Heart left ventricle (tissue), 16 donors: ENCODE measurements at regions of chr6 and their contacts with region 1.

Region 1: DNA sequence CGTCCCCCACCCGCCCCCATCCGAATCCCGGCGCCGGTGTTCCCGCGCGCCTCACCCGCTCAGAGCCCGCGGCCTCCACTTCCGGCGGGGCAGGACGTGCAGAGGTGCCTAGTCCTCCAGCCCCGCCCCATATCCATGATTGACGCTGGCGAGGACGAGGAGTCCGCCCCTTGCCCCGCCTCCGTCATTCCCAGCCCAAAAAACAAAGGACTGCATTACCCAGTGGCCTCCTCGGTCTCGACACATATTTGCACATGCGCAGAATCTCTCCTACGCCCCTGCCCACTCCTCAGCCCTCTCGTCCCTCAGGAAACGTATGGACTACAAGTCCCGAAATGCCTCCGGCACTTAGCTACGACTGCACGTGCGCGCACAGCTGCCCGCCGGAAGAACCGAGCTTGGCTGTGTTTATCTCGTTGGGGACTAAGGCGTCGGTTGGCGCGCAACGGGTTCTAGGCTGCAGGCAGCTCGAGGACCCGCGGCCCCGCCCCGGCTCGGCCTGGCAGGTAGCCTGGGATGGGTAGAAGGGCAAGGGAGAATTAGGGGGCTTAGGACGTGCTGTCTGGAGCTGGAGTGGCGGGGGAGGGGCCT is at the starts of genes KLHDC3 and MEA1:
- DNase-seq: peak; percentile 99
- ATAC-seq: peak; percentile 92 to 96 (median 94)
- H3K4me3 ChIP-seq: peak within 1 kb of the TSS; percentile 51 to 90 (median 74)
- H3K27ac ChIP-seq: peak within 1 kb of the TSS; percentile 25 to 97 (median 84)
- H3K4me1 ChIP-seq: peaks cover 4 to 57% (median 47%) of the 10 kb centered on the region in 12 donors
- H3K27me3 ChIP-seq: no peaks in the 10 kb centered on the region
- CTCF ChIP-seq: no peak
- POLR2A ChIP-seq: peak; percentile 22 to 65
- total RNA-seq, gene KLHDC3: 79.4 to 180 (median 102) TPM
- total RNA-seq, gene MEA1: 24.5 to 46.2 (median 32.1) TPM

Region 2: DNA sequence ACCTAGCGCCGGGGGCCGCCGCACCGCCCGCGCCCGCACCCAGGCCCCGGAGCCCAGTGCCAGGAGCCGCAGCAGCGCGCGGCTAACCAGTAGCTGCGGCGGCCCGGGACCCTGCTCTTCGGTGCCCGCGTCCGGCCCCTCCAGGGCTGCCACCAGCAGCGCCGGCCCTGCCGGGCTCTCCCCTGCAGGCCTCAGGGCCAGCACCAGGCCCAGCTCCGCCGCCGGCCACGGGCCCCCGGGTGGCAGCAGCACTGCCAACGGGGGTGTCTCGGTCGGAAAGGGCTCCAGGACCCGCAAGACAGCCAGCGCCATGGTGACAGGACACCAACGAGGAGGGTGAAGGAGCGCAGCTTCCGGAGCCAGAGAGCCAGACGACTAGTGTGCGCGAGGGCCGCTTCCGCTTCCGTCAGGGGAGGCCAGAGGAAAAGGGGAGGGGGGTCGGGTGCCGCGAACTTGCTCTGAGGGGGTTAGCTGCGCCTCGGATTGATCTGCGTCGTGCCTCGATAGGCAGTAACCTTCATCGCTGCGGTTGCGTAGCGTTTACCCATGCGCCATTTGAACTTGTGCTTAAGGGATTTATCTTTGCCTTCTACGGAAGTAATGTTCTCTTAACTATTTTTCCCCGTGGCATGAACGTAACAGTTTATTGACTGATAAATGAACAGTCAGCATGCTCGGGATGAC is 35.0 kb before region 1 on chr6 and contains the start of gene PEX6:
- intact Hi-C with region 1: loop called in 2 of 10 experiments (anchors 2 to 5 kb)
- DNase-seq: peak; percentile 90 to 96 (median 94)
- ATAC-seq: peak; percentile 93 to 97 (median 96)
- H3K4me3 ChIP-seq: peak within 1 kb of the TSS; percentile 61 to 99 (median 88)
- H3K27ac ChIP-seq: peak within 1 kb of the TSS; percentile 27 to 95 (median 91)
- H3K4me1 ChIP-seq: peaks cover 0 to 41% (median 28%) of the 10 kb centered on the region in 12 donors
- H3K27me3 ChIP-seq: no peaks in the 10 kb centered on the region
- CTCF ChIP-seq: no peak
- POLR2A ChIP-seq: peak in 1 of 2 donors; percentile 52
- total RNA-seq, gene PEX6: 11.2 to 27.3 (median 19.6) TPM

Region 3: GRCh38 chr6:43053545-43054205 is 39.7 kb after region 1 on chr6 and contains the start of gene CUL7:
- intact Hi-C with region 1: loop called in 5 of 10 experiments (anchors 2 to 5 kb)
- DNase-seq: peak; percentile 93 to 96 (median 96)
- ATAC-seq: peak; percentile 92 to 97 (median 96)
- H3K4me3 ChIP-seq: peak within 1 kb of the TSS; percentile 36 to 87 (median 74)
- H3K27ac ChIP-seq: peak within 1 kb of the TSS; percentile 81 to 97 (median 94)
- H3K4me1 ChIP-seq: peaks cover 0 to 34% (median 18%) of the 10 kb centered on the region in 12 donors
- H3K27me3 ChIP-seq: no peaks in the 10 kb centered on the region
- CTCF ChIP-seq: peak in 3 of 12 donors; percentile 3 to 12 (median 7)
- POLR2A ChIP-seq: peak in 1 of 2 donors; percentile 83
- total RNA-seq, gene CUL7: 5.6 to 13.2 (median 7.9) TPM

Region 4: DNA sequence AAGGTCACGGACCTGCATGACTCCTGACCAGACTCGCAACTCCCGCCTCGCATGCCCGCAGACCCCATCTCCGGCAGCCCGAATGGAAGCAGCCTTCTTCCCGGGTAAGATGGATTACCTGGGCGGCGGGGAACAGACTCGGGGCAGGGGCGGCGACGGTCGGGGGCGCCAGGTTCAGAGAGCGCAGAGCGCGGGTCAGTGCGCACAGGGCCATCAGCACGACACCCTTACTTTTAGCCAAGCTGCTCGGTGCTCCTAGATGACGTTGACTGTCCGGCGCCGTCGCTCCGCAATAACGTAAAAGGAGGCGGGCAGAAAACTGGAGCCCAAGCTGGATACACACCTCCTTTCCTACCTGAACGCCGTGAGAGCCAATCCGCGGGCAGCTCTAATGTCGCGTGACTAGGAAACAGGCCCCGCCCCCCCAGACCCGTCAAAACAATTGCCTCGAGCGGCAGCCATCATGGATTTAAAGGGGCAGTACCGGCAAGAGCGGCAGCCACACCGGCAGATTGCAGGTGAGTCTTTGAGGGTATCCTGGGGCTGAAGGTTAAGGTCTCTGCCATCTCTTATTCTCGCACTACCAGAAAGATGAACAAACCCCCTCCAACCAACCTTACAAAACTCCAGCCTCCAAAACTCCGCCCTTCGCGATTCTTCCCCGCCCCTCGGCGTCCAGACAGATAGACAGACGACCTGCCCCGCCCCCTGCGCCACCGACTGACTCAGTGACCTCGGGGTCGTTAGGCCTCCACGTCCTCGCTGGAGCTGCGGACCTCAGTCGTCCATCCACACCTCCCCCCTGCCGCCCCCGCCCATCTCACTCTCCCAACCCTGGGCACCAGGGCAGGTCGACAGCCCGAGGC is 45.5 kb after region 1 on chr6 and contains the starts of genes KLC4 and MRPL2:
- intact Hi-C with region 1: loop called in 7 of 10 experiments (anchors 1 to 5 kb)
- DNase-seq: peak; percentile 97 to 99 (median 98)
- ATAC-seq: peak; percentile 96 to 99 (median 98)
- H3K4me3 ChIP-seq: peak within 1 kb of the TSS; percentile 69 to 96 (median 84)
- H3K27ac ChIP-seq: peak within 1 kb of the TSS; percentile 67 to 98 (median 88)
- H3K4me1 ChIP-seq: peaks cover 0 to 41% (median 21%) of the 10 kb centered on the region in 12 donors
- H3K27me3 ChIP-seq: no peaks in the 10 kb centered on the region
- CTCF ChIP-seq: no peak
- POLR2A ChIP-seq: peak in 1 of 2 donors; percentile 69
- total RNA-seq, gene KLC4: 18.8 to 35.4 (median 26.9) TPM
- total RNA-seq, gene MRPL2: 54.0 to 98.5 (median 83.1) TPM

Region 5: GRCh38 chr6:43129434-43130194 is 115.7 kb after region 1 on chr6:
- intact Hi-C with region 1: loop called in 3 of 10 experiments (anchors 1 to 5 kb)
- DNase-seq: peak in 1 of 5 donors; percentile 50
- ATAC-seq: peak; percentile 63 to 85 (median 77)
- H3K4me3 ChIP-seq: no peak overlapping the region
- H3K27ac ChIP-seq: no peak overlapping the region
- H3K4me1 ChIP-seq: peaks cover 0 to 10% (median 1%) of the 10 kb centered on the region in 12 donors
- H3K27me3 ChIP-seq: no peaks in the 10 kb centered on the region
- CTCF ChIP-seq: peak; percentile 17 to 60 (median 47)
- POLR2A ChIP-seq: no peak

Region 6: DNA sequence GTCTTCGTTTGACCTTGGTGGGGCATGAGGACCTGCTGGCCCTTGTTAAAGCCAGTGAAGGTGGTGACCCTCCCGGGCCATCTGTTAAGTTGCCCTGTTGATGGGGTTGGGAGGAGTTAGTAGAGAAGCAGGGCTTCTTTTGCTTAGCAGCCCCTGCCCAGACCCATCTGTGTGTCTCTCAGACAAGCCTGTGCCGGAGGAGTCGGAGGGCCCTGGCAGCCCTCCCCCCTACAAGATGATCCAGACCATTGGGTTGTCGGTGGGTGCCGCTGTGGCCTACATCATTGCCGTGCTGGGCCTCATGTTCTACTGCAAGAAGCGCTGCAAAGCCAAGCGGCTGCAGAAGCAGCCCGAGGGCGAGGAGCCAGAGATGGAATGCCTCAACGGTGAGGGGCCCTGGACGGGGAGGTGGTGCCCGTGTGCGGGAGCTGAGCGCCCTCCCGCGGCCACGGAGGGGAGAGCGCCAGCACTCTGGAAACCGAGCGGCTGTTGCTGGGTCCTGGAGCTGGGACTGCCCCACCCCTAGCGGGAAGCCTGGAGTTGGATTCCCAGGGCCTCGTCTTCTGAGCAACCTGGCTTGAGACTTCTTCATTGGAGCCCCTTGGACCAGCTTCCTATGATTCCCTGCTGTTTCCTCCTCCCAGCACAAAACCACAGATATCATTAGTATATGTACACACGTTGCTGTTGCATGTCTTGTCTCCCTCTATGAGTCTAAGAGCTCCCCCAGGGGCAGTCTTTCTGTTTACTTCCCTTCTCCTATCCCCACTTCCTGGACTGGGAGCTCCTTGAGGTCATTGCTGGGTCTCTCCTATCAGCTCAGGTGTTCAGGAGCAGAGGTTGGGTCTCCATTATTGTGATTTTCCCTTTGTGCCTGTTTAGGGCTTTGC is 129.5 kb after region 1 on chr6:
- intact Hi-C with region 1: loop called (anchors 1 to 5 kb)
- DNase-seq: peak; percentile 87 to 95 (median 90)
- ATAC-seq: peak; percentile 84 to 97 (median 96)
- H3K4me3 ChIP-seq: peak overlapping the region in 2 of 12 donors; percentile 12 to 32
- H3K27ac ChIP-seq: peak overlapping the region in 8 of 12 donors; percentile 2 to 70 (median 34)
- H3K4me1 ChIP-seq: peaks cover 0 to 17% (median 11%) of the 10 kb centered on the region in 12 donors
- H3K27me3 ChIP-seq: no peaks in the 10 kb centered on the region
- CTCF ChIP-seq: peak; percentile 86 to 98 (median 94)
- POLR2A ChIP-seq: no peak